ENCODE measurements at regions of chr13 and their contacts with region 1.

Region 1: DNA sequence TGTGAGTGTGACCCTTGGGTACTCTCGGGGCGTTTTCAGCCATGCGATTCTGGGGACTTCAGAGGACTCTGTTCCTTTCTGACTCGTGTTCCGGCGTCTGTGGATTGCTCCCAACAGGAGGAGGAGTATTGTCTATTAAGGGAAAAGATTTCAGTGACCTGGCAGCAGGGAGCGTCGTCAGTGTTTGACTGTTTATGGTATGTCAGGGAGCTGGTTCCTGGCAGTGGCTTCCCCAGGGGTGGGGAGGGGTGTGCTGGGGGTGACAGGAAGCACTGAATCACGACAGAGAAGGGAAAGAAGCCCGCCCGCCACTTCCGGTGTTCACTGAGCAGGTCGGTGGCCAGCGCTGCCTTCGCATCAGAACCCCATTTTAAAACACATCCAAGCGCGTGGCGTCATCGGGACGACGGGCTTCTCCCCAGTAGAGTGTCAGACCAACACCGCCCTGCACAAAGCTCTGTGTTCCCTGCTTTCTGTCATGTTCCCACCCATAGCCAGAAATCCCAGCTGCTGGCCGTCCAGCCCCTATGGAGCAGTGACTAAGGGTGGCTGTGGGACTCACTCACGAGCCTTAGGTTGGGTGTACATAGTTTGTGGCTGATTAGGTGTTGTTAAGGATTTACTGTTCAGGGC is 33.8 kb downstream of the COL4A2 start:
- DNase-seq: peak in 8 of 9 donors; percentile 38 to 69 (median 52)
- ATAC-seq: peak; percentile 70
- H3K4me3 ChIP-seq: peak overlapping the region; percentile 15
- H3K4me3 Mint-ChIP-seq: peak overlapping the region; percentile 72 to 86 (median 78)
- H3K27ac ChIP-seq: peak overlapping the region; percentile 46
- H3K27ac Mint-ChIP-seq: peak overlapping the region; percentile 71 to 95 (median 87)
- H3K4me1 ChIP-seq: peaks cover 0 to 17% of the 10 kb centered on the region in 2 donors
- H3K4me1 Mint-ChIP-seq: peaks cover 19 to 39% (median 33%) of the 10 kb centered on the region in 7 donors
- H3K27me3 ChIP-seq: no peaks in the 10 kb centered on the region
- H3K27me3 Mint-ChIP-seq: peaks cover 0 to 39% (median 5%) of the 10 kb centered on the region in 5 donors

Region 2: DNA sequence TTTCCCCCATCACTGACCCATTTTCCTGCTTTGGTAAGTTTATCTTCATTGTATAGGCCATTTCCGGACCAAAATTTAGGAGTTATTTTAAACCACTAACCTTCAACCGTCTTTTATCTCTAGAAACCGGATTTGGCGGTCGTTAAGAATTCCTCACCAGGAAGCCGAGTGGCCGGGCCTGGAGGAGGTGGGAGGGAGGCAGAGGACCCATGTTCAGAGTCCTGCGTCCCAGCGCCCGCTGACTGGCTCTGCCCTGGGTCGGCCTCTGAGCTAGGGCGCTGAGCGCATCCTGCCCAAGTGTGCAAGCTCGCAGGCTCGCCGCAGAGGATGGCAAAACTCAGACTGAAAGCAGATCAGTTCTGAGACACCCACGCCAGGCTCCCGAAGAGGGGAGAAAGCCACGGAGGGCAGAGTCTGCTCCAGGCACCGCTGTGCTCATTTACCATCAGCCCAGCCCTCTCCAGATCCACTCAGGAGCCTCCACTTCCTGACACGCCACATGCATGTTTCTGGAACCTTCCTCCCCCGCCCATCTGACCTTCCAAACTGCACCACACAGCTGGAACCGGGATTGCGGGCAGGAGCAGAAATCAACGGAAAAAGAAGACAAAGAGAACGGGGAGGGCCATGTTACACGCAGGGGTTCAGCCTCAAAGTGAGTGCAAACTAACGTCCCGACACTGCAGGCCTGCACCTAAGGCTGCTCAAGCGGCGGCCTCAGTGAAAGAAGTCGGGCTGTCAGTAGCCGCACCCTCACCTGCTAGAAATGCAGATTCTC is 42.2 kb before region 1 on chr13:
- CTCF ChIA-PET with region 1: no interaction called
- POLR2A ChIA-PET with region 1: no interaction called
- intact Hi-C with region 1: no loop called
- DNase-seq: peak in 1 of 9 donors; percentile 39
- ATAC-seq: no peak
- H3K4me3 ChIP-seq: no peak overlapping the region
- H3K4me3 Mint-ChIP-seq: no peak overlapping the region
- H3K27ac ChIP-seq: no peak overlapping the region
- H3K27ac Mint-ChIP-seq: no peak overlapping the region
- H3K4me1 ChIP-seq: no peaks in the 10 kb centered on the region
- H3K4me1 Mint-ChIP-seq: peaks cover 0 to 7% (median 0%) of the 10 kb centered on the region in 7 donors
- H3K27me3 ChIP-seq: peaks cover 0 to 3% of the 10 kb centered on the region in 2 donors
- H3K27me3 Mint-ChIP-seq: peaks cover 60 to 71% (median 62%) of the 10 kb centered on the region in 5 donors

Region 3: DNA sequence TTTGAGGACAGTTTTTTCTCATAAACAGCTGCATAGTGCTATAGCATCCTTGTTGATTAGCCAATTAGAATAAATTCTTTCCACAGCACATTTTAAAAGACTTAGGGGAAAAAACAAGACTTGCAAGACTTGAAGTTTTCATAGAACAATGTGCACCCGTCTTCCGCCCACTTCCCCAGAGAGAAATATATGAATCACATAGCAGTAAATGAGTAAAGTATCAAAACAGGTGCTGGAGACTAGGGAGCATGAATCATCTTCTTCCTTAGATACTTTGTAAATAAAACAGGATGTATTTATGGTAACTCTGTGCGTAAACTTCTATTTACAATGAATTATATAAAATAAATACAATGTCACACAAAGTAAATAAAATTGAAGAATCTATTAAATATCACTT is 41.3 kb after region 1 on chr13:
- CTCF ChIA-PET with region 1: no interaction called
- POLR2A ChIA-PET with region 1: interaction called, 5 read pairs
- intact Hi-C with region 1: loop called in 1 of 2 experiments (anchors 5 kb)
- DNase-seq: no peak
- ATAC-seq: no peak
- H3K4me3 ChIP-seq: no peak overlapping the region
- H3K4me3 Mint-ChIP-seq: no peak overlapping the region
- H3K27ac ChIP-seq: no peak overlapping the region
- H3K27ac Mint-ChIP-seq: no peak overlapping the region
- H3K4me1 ChIP-seq: no peaks in the 10 kb centered on the region
- H3K4me1 Mint-ChIP-seq: no peaks in the 10 kb centered on the region
- H3K27me3 ChIP-seq: no peaks in the 10 kb centered on the region
- H3K27me3 Mint-ChIP-seq: peaks cover 3 to 17% (median 14%) of the 10 kb centered on the region in 5 donors

Region 4: DNA sequence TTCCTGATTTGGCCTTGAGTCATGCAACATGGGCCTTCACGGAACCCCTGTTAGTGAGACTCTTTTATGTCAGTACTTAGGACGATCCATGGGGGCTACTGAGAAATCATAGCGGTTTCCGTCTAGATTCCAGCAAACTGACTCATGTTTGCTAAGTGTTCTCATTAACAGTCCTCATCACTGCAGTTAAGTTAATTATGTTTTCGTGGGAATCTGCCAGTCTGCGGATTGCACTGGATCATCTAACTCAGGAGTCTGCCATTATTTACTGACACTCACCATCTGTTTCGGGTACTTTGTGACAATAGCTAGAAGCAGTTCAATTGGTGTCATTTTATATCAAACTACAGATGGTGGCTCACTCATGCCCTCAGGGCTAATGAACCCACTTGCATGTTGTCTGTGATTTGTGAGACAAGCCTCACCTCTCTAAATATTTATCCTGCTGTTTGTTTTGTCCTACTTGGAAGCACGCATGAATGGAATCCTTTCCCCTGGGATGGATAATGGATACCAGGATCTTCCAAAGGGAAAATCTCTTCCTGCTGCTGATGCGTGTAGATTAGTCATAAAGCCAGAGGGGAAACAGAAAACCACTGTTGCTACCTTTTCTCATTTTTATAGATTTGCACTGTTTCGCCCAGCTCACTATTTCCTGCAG is 158.8 kb after region 1 on chr13:
- CTCF ChIA-PET with region 1: no interaction called
- POLR2A ChIA-PET with region 1: no interaction called
- intact Hi-C with region 1: no loop called
- DNase-seq: no peak
- ATAC-seq: no peak
- H3K4me3 ChIP-seq: no peak overlapping the region
- H3K4me3 Mint-ChIP-seq: no peak overlapping the region
- H3K27ac ChIP-seq: no peak overlapping the region
- H3K27ac Mint-ChIP-seq: peak overlapping the region in 1 of 9 donors; percentile 5
- H3K4me1 ChIP-seq: no peaks in the 10 kb centered on the region
- H3K4me1 Mint-ChIP-seq: no peaks in the 10 kb centered on the region
- H3K27me3 ChIP-seq: no peaks in the 10 kb centered on the region
- H3K27me3 Mint-ChIP-seq: peaks cover 0 to 9% (median 4%) of the 10 kb centered on the region in 5 donors